Caco-2 (cell line): ENCODE measurements at regions of chr17 and their contacts with region 1.

Region 1: DNA sequence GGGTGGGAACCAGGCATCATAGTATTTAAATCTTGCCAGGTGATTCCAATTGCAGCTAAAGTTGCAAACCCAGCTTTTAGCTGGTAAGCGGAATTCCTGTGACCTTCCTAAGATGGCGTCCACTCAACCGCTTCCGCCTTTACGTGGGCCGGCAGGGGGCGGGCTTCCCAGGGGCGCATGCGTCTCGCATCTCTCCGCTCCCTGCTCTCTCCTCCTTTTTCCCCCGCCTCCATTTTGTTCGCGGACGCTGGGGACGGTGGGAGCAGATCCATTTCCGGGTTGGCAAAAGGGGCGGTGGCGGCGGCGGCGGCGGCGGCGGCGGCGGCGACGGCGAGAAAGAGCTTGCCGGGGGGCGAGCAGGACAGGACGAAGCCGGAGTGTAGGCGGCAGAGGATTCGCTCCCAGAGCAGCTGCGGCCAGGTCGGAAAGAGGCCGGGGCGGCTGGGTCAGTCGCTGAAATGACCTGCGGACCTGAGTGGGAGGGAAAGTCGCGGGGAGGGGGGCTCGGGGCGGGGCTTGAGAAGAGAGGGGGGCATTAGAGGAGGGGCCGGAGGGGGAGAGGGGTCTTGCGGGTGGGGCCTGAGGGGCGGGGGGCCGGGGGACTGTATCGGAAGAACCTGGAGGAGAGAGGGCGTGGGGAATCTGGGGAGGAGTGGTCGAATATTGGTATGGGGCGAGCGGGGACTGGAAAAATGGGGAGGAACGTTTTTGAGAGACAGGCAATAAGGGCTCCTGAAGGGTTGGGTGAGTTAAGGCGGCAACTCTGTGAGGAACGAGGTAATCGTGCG is at the start of gene WIPF2:
- DNase-seq: peak; percentile 98 to 99
- H3K4me3 ChIP-seq: peak within 1 kb of the TSS; percentile 67
- H3K4me3 Mint-ChIP-seq: peak within 1 kb of the TSS; percentile 91
- H3K27ac Mint-ChIP-seq: peak within 1 kb of the TSS; percentile 94
- H3K4me1 ChIP-seq: no peaks in the 10 kb centered on the region; the same call in 1 of the 2 replicates
- H3K4me1 Mint-ChIP-seq: peaks cover 13% of the 10 kb centered on the region
- H3K27me3 ChIP-seq: no peaks in the 10 kb centered on the region
- H3K27me3 Mint-ChIP-seq: no peaks in the 10 kb centered on the region
- CTCF ChIP-seq: peak; percentile 83
- total RNA-seq, gene WIPF2: 33.4 and 38.3 TPM in 2 replicates

Region 2: DNA sequence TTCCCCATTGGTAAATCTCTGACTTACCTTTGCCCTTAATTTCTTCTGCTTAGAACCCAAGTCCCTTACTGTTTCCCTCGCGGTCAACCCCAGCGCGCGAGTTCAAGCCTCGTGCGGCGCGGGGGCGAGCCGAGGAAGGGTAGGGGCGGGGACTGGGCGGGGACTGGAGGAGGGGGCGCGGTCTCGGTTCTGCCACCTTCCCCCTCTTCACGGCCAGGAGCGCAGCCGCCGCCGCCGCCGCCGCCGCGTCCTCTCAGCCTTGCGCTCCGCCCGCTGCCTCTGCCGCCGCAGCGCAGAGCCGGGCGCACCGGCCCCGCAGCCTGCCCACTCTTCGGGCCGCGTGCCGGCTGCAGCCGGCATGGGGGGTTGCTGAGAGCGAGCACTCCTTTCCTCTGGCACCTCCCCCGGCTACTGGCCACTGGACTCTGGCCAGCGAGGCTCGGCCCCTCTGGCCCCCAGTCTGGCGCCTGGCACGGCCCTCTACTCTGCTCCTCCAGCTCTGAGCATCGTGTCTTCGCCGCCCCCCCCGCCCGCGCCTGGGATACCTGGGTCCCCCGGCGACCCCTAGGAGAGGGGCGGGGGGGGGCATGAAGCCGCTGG is 41.9 kb before region 1 on chr17 and contains the start of gene RAPGEFL1:
- CTCF ChIA-PET with region 1: interaction called, 6 read pairs
- POLR2A ChIA-PET with region 1: interaction called, 10 read pairs
- intact Hi-C with region 1: no loop called
- DNase-seq: peak; percentile 82 to 86
- H3K4me3 ChIP-seq: peak within 1 kb of the TSS; percentile 68
- H3K4me3 Mint-ChIP-seq: peak within 1 kb of the TSS; percentile 73
- H3K27ac Mint-ChIP-seq: peak within 1 kb of the TSS; percentile 76
- H3K4me1 ChIP-seq: peaks cover 15% of the 10 kb centered on the region
- H3K4me1 Mint-ChIP-seq: peaks cover 21% of the 10 kb centered on the region
- H3K27me3 ChIP-seq: no peaks in the 10 kb centered on the region
- H3K27me3 Mint-ChIP-seq: no peaks in the 10 kb centered on the region
- CTCF ChIP-seq: no peak
- total RNA-seq, gene RAPGEFL1: 13.2 and 15.0 TPM in 2 replicates

Region 3: GRCh38 chr17:40203131-40203530 is 16.1 kb before region 1 on chr17:
- CTCF ChIA-PET with region 1: interaction called, 29 read pairs
- POLR2A ChIA-PET with region 1: interaction called, 7 read pairs
- intact Hi-C with region 1: loop called (anchors 2 kb)
- DNase-seq: no peak
- H3K4me3 ChIP-seq: no peak overlapping the region
- H3K4me3 Mint-ChIP-seq: no peak overlapping the region
- H3K27ac Mint-ChIP-seq: no peak overlapping the region
- H3K4me1 ChIP-seq: 0 out of 2 replicates have a peak, but pooled peaks cover 4% of the 10 kb centered on the region
- H3K4me1 Mint-ChIP-seq: no peaks in the 10 kb centered on the region
- H3K27me3 ChIP-seq: no peaks in the 10 kb centered on the region
- H3K27me3 Mint-ChIP-seq: no peaks in the 10 kb centered on the region
- CTCF ChIP-seq: no peak

Region 4: GRCh38 chr17:40287494-40288369 is 68.5 kb after region 1 on chr17 and contains the start of gene CDC6:
- CTCF ChIA-PET with region 1: interaction called, 10 read pairs
- POLR2A ChIA-PET with region 1: interaction called, 6 read pairs
- intact Hi-C with region 1: loop called (anchors 1 kb)
- DNase-seq: peak; percentile 99 to 100
- H3K4me3 ChIP-seq: peak within 1 kb of the TSS; percentile 90
- H3K4me3 Mint-ChIP-seq: peak within 1 kb of the TSS; percentile 95
- H3K27ac Mint-ChIP-seq: peak within 1 kb of the TSS; percentile 96
- H3K4me1 ChIP-seq: peaks cover 21% of the 10 kb centered on the region
- H3K4me1 Mint-ChIP-seq: peaks cover 7% of the 10 kb centered on the region
- H3K27me3 ChIP-seq: no peaks in the 10 kb centered on the region
- H3K27me3 Mint-ChIP-seq: no peaks in the 10 kb centered on the region
- CTCF ChIP-seq: no peak
- total RNA-seq, gene CDC6: 86.1 and 96.4 TPM in 2 replicates

Region 5: DNA sequence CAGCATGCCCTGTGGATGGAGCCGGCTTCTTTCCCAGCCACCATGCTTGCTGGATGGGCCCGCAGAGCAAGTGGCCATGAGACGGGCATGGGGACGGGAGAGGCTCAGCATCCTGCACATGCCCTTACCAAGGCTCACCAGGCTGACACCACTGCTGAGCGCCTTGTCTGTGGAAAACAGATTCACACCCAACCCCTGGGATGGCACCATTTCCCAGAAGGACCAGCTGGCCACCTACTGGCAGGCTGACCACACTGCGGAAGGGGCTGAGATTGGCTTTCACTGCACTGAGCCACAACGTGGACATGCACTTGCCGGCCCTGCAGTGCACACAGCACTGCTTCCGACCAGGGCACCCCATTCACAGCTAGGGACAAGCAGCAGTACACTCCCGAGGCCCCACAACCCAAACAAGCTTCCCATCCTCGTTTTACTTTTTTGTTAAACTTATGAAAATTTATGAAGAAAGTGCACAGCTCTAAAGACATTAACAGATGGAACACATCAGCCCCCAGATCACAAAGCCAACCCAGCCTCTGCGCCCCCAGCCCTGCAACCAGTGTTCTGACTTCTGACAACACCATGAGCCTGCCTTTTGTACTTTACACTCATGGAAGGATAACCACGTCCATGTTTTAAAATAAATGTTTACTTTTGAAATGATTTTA is 1110.1 kb after region 1 on chr17:
- CTCF ChIA-PET with region 1: no interaction called
- POLR2A ChIA-PET with region 1: no interaction called
- intact Hi-C with region 1: no loop called
- DNase-seq: peak; percentile 74 to 81
- H3K4me3 ChIP-seq: no peak overlapping the region
- H3K4me3 Mint-ChIP-seq: no peak overlapping the region
- H3K27ac Mint-ChIP-seq: no peak overlapping the region
- H3K4me1 ChIP-seq: no peaks in the 10 kb centered on the region
- H3K4me1 Mint-ChIP-seq: no peaks in the 10 kb centered on the region
- H3K27me3 ChIP-seq: no peaks in the 10 kb centered on the region
- H3K27me3 Mint-ChIP-seq: no peaks in the 10 kb centered on the region
- CTCF ChIP-seq: peak; percentile 85 to 91